ENCODE measurements at regions of chr5 and their contacts with region 1.

Region 1: GRCh38 chr5:72641164-72641563 is 134.0 kb upstream of the ZNF366 start:
- DNase-seq: no peak
- ATAC-seq: no peak
- H3K4me3 ChIP-seq: no peak overlapping the region
- H3K27ac ChIP-seq: no peak overlapping the region
- H3K4me1 ChIP-seq: no peaks in the 10 kb centered on the region
- CTCF ChIP-seq: no peak
- EP300 ChIP-seq: no peak
- POLR2A ChIP-seq: no peak
- RAD21 ChIP-seq: no peak

Region 2: GRCh38 chr5:72510610-72511181 is 130.5 kb before region 1 on chr5:
- CTCF ChIA-PET with region 1: no interaction called
- POLR2A ChIA-PET with region 1: no interaction called
- DNase-seq: no peak
- ATAC-seq: no peak
- H3K4me3 ChIP-seq: no peak overlapping the region
- H3K27ac ChIP-seq: no peak overlapping the region
- H3K4me1 ChIP-seq: no peaks in the 10 kb centered on the region
- CTCF ChIP-seq: no peak
- EP300 ChIP-seq: no peak
- POLR2A ChIP-seq: no peak
- RAD21 ChIP-seq: no peak

Region 3: GRCh38 chr5:72628771-72629371 is 12.3 kb before region 1 on chr5:
- CTCF ChIA-PET with region 1: interaction called, 12 read pairs
- POLR2A ChIA-PET with region 1: no interaction called
- DNase-seq: no peak
- ATAC-seq: no peak
- H3K4me3 ChIP-seq: no peak overlapping the region
- H3K27ac ChIP-seq: no peak overlapping the region
- H3K4me1 ChIP-seq: peaks cover 8% of the 10 kb centered on the region; the same call in 1 of the 3 replicates
- CTCF ChIP-seq: no peak
- EP300 ChIP-seq: no peak
- POLR2A ChIP-seq: no peak
- RAD21 ChIP-seq: no peak

Region 4: GRCh38 chr5:72702871-72703434 is 61.8 kb after region 1 on chr5:
- CTCF ChIA-PET with region 1: no interaction called
- POLR2A ChIA-PET with region 1: no interaction called
- DNase-seq: no peak
- ATAC-seq: no peak
- H3K4me3 ChIP-seq: no peak overlapping the region
- H3K27ac ChIP-seq: no peak overlapping the region
- H3K4me1 ChIP-seq: no peaks in the 10 kb centered on the region
- CTCF ChIP-seq: no peak
- EP300 ChIP-seq: no peak
- POLR2A ChIP-seq: no peak
- RAD21 ChIP-seq: no peak

Measured in A549 (cell line).